ENCODE measurements at regions of chr1 and their contacts with region 1.

Region 1: DNA sequence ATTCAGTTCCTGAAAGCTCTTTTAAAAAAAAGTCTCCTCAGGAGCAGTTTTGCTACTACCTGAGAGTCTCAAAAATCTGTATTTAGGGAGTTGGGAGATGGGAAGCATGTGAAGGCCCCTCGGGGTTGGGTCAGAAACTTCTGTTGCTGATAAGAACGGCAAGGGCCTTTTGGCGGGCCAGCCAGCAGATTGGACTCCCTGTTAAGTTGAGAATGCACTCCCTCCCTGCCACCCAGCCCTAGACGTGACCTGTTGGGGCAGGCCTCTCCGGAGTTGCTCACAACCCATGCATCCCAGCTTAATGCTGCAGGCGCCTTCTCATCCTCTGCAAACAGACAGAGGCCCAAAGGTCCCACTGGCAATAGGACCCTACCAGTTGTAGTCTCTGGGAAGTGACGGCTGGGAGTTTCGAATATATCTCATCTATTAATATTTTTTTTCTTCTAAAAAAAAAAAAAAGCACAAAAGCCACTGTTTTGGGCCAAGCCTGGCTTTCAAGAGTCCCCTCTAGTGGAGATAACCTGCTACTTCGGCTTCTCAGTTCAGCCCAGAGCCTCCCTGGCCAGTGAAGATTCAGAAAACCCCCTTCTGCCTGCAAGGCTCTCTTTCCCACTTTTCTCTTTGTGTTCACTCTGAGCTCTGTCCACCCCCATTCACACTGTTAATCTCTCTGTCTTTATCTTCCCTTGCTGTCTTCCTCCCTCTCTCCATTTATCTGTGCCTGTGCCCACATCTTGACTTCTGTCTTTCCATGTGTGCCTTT is 5.3 kb downstream of the PLXNA2 start:
- H3K4me3 ChIP-seq: no peak overlapping the region
- H3K27ac ChIP-seq: no peak overlapping the region
- H3K4me1 ChIP-seq: peaks cover 6% of the 10 kb centered on the region; the same call in 1 of the 2 replicates
- CTCF ChIP-seq: no peak

Region 2: DNA sequence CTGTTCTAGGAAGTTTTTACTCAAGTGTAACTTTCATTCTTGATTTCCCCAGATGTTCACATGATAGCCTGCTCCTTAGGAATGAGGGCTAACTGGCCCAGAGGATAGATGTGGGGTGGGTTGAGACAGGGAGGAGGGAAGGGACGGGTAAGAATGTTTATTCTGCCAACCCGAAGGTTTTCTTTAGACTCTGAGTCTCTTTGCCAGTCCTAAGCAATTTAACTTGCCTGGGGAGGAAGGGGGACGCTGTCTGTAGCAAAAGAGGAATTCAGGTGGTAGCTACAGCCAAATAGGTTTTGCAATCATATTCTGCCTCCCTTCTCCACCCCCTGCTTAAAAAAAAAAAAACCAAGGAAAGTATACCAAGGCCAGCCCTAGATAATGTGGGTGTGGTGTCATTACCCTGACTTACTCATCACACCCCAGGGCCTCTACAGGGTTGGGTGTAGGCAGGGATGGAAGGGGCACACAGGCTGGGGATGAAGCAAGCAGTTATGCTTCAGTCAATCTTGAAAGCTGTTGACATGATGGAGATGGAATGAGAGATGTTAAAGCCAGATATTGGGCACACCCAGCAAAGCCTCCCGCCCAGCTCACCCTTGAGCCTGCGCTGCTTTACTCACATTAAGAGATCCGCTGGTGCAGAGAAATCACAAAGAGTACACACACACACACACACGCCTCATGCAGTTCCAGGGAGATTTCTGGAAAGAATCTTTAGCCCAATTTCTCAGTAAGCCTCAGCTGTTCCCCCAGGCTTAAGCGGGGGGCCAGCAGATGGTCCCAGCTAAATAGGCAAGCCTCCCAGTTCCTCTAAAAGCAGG is 54.6 kb before region 1 on chr1:
- CTCF ChIA-PET with region 1: interaction called, 50 read pairs
- POLR2A ChIA-PET with region 1: interaction called, 6 read pairs
- H3K4me3 ChIP-seq: no peak overlapping the region
- H3K27ac ChIP-seq: peak overlapping the region; percentile 51; the same call in 1 of the 2 replicates
- H3K4me1 ChIP-seq: peaks cover 31% of the 10 kb centered on the region
- CTCF ChIP-seq: no peak

Region 3: GRCh38 chr1:208211921-208212843 is 26.7 kb before region 1 on chr1:
- CTCF ChIA-PET with region 1: interaction called, 10 read pairs
- POLR2A ChIA-PET with region 1: no interaction called
- H3K4me3 ChIP-seq: no peak overlapping the region
- H3K27ac ChIP-seq: no peak overlapping the region
- H3K4me1 ChIP-seq: no peaks in the 10 kb centered on the region
- CTCF ChIP-seq: no peak

Region 4: GRCh38 chr1:208251911-208252835 is 13.3 kb after region 1 on chr1:
- CTCF ChIA-PET with region 1: interaction called, 13 read pairs
- POLR2A ChIA-PET with region 1: interaction called, 4 read pairs
- H3K4me3 ChIP-seq: no peak overlapping the region
- H3K27ac ChIP-seq: no peak overlapping the region
- H3K4me1 ChIP-seq: no peaks in the 10 kb centered on the region
- CTCF ChIP-seq: peak; percentile 35; the same call in 1 of the 2 replicates

Measured in HEK293 (cell line).